CD4-positive, alpha-beta memory T cell (primary cell): ENCODE measurements at regions of chr11 and their contacts with region 1.

Region 1: GRCh38 chr11:96464700-96465307 is 75.0 kb downstream of the JRKL start:
- DNase-seq: peak in 4 of 5 donors; percentile 51 to 59 (median 54)
- H3K4me3 ChIP-seq: no peak overlapping the region
- H3K4me3 Mint-ChIP-seq: peak overlapping the region in 3 of 8 donors; percentile 9 to 73 (median 72)
- H3K27ac ChIP-seq: no peak overlapping the region
- H3K27ac Mint-ChIP-seq: no peak overlapping the region
- H3K4me1 ChIP-seq: peaks cover 4% of the 10 kb centered on the region
- H3K4me1 Mint-ChIP-seq: peaks cover 0 to 7% (median 3%) of the 10 kb centered on the region in 4 donors
- H3K27me3 ChIP-seq: no peaks in the 10 kb centered on the region
- H3K27me3 Mint-ChIP-seq: peaks cover 3 to 6% of the 10 kb centered on the region in 2 donors

Region 2: GRCh38 chr11:96447208-96448110 is 17.3 kb before region 1 on chr11:
- CTCF ChIA-PET with region 1: interaction called, 43 read pairs
- POLR2A ChIA-PET with region 1: no interaction called
- intact Hi-C with region 1: no loop called
- DNase-seq: no peak
- H3K4me3 ChIP-seq: no peak overlapping the region
- H3K4me3 Mint-ChIP-seq: no peak overlapping the region
- H3K27ac ChIP-seq: no peak overlapping the region
- H3K27ac Mint-ChIP-seq: no peak overlapping the region
- H3K4me1 ChIP-seq: no peaks in the 10 kb centered on the region
- H3K4me1 Mint-ChIP-seq: no peaks in the 10 kb centered on the region
- H3K27me3 ChIP-seq: no peaks in the 10 kb centered on the region
- H3K27me3 Mint-ChIP-seq: peaks cover 13 to 18% of the 10 kb centered on the region in 2 donors

Region 3: DNA sequence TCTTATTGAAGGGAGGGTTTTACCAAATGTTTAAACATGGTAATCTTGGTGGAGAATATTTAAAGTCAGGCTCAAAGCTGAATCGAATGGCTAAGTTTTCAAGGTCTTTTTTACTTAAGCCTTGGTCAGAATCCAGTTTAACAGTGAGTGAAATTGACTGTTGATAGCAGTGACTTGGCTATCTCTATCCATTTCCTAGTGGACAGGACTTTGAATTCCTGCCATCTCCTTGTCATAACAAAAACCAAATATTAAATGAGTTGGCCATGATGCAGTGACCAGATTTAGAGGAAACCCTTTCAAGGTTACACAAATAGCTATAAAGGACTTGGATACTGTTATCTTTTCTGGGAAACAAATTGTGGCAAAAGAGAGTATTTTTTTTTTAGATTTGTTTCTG is 17.0 kb after region 1 on chr11:
- CTCF ChIA-PET with region 1: interaction called, 17 read pairs
- POLR2A ChIA-PET with region 1: no interaction called
- intact Hi-C with region 1: no loop called
- DNase-seq: no peak
- H3K4me3 ChIP-seq: no peak overlapping the region
- H3K4me3 Mint-ChIP-seq: no peak overlapping the region
- H3K27ac ChIP-seq: no peak overlapping the region
- H3K27ac Mint-ChIP-seq: no peak overlapping the region
- H3K4me1 ChIP-seq: no peaks in the 10 kb centered on the region
- H3K4me1 Mint-ChIP-seq: no peaks in the 10 kb centered on the region
- H3K27me3 ChIP-seq: no peaks in the 10 kb centered on the region
- H3K27me3 Mint-ChIP-seq: peaks cover 11 to 14% of the 10 kb centered on the region in 2 donors